Mammary epithelial cell (primary cell): ENCODE measurements at regions of chr14 and their contacts with region 1.

Region 1: GRCh38 chr14:28661171-28661772 is 105.3 kb upstream of the FOXG1 start:
- DNase-seq: peak; percentile 85
- H3K4me3 ChIP-seq: no peak overlapping the region
- H3K27ac ChIP-seq: peak overlapping the region; percentile 90
- H3K4me1 ChIP-seq: peaks cover 25% of the 10 kb centered on the region
- H3K27me3 ChIP-seq: no peaks in the 10 kb centered on the region
- CTCF ChIP-seq: no peak

Region 2: DNA sequence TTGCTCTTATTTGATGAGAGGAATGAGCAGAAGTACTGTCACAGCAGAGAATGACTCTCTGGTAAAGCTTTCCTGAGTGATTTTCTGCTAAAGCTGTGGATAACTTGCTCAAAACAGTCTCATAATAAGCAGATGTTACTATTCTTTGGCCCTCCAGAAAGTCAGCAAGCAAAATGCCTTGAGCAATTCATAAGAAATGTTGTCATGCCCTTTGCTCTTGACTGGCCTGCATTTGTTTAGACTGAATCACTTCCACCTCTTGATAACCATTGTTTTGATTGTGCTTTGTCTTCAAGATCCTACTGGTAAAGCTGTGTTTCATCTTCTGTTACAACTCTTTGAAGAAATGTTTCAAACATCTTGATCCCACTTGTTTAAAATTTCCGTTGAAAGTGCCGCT is 352.5 kb before region 1 on chr14:
- CTCF ChIA-PET with region 1: no interaction called
- dilution Hi-C with region 1: no loop called
- in situ Hi-C with region 1: no loop called
- intact Hi-C with region 1: no loop called
- DNase-seq: peak; percentile 81
- H3K4me3 ChIP-seq: no peak overlapping the region
- H3K27ac ChIP-seq: peak overlapping the region; percentile 69
- H3K4me1 ChIP-seq: peaks cover 25% of the 10 kb centered on the region
- H3K27me3 ChIP-seq: no peaks in the 10 kb centered on the region
- CTCF ChIP-seq: no peak

Region 3: DNA sequence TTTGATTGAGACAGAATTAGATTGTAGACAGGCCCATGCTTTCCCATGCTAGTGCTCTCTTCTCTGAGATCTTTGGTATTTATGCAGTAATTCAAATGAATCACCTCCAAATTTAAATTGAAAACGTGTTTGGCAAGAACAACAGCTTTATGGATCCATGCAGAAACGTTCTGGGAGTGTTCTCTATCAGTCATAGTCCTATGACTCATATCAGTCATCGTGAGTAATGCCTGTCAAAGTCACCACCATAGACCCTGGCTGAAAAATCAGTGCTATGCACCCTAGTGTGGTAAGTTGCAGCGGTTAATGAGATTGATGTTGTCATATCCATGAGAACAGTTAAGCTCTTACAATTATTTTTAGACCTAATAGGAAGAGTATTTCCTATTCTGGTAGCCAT is 15.2 kb after region 1 on chr14:
- CTCF ChIA-PET with region 1: no interaction called
- dilution Hi-C with region 1: no loop called
- in situ Hi-C with region 1: no loop called
- intact Hi-C with region 1: loop called (anchors 2 kb)
- DNase-seq: peak; percentile 96
- H3K4me3 ChIP-seq: no peak overlapping the region
- H3K27ac ChIP-seq: peak overlapping the region; percentile 62
- H3K4me1 ChIP-seq: peaks cover 36% of the 10 kb centered on the region
- H3K27me3 ChIP-seq: no peaks in the 10 kb centered on the region
- CTCF ChIP-seq: no peak